ENCODE measurements at regions of chr6 and their contacts with region 1.

Region 1: DNA sequence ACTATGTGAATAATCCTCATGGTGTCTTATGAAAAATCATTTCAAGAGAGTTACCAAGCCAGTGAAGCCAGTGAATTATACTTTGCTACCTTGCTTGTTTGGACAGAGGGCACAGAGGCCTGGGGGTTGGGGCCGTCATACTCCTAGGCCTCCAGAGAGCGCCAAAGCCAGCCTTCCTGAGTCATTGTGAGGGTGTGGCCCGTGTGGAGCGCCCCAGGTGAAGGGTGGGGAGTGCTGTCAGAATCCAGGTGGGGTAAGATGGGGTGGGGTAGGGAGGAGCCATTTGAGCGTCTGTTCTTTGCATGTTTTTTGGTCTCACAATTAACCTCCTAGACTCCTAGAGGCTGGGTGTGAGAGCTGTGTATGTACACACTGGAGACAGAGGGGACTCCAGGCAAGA is 71.1 kb downstream of the PERP start:
- DNase-seq: peak; percentile 74 to 91
- H3K4me3 ChIP-seq: no peak overlapping the region
- CTCF ChIP-seq: no peak
- POLR2A ChIP-seq: no peak

Region 2: DNA sequence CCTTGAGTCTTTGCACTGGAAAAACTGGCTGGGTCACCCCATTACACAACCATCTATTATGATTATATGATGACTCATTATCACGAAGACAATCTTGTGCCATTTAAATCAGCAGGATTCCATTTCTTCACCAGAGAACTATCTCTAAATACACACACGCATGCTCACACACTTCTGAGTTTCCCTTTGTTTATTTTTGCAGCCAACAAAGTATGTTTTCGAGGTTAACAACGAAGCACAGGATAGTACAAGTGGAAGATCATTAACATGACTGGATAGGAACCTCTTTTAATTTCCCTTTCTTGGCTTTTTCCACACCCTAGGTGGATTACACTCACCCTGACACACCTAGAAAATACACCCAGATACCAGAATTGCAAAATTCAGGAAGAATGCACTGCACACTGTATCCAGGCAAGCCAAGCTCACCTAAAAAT is 52.2 kb after region 1 on chr6:
- intact Hi-C with region 1: loop called (anchors 5 kb)
- DNase-seq: peak in 1 of 2 donors; percentile 75
- H3K4me3 ChIP-seq: no peak overlapping the region
- CTCF ChIP-seq: no peak
- POLR2A ChIP-seq: no peak

Region 3: GRCh38 chr6:138109042-138109997 is 73.2 kb after region 1 on chr6:
- intact Hi-C with region 1: loop called (anchors 2 kb)
- DNase-seq: peak; percentile 82 to 97
- H3K4me3 ChIP-seq: no peak overlapping the region
- CTCF ChIP-seq: peak in 2 of 3 donors; percentile 56 to 63
- POLR2A ChIP-seq: no peak

Region 4: GRCh38 chr6:138896104-138896756 is 860.1 kb after region 1 on chr6:
- intact Hi-C with region 1: no loop called
- DNase-seq: no peak
- H3K4me3 ChIP-seq: no peak overlapping the region
- CTCF ChIP-seq: no peak
- POLR2A ChIP-seq: no peak